Motor neuron (in vitro differentiated cells): ENCODE measurements at regions of chr17 and their contacts with region 1.

Region 1: DNA sequence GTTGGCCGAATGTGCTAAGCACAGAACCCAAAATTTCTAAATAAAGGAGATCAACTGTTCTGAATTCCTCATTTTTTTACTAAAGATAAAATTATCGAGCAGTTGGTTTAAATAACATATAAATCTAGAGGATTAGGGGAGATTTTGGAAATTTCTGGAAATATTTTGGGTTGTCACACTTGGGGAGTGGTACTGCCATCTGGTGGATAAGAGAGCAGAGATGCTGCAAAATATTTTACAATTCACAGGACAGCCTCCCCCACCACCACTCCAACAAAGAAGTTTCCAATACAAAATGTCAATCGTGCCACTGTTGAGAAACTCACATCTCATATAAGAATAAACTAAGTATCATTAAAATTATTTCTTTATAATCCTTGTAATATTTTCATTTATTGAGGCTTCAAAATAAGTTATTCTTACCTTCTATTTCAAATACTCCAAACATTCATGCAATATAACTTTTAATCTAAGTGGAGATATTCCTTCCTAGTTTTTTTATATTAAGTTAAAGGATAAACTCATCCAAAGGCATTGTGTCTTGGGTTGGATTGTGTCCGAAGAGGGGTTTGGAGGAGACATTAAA is 17.0 kb upstream of the ABCA8 start:
- ATAC-seq: no peak
- H3K4me3 ChIP-seq: no peak overlapping the region
- H3K27ac ChIP-seq: no peak overlapping the region
- H3K4me1 ChIP-seq: no peaks in the 10 kb centered on the region

Region 2: DNA sequence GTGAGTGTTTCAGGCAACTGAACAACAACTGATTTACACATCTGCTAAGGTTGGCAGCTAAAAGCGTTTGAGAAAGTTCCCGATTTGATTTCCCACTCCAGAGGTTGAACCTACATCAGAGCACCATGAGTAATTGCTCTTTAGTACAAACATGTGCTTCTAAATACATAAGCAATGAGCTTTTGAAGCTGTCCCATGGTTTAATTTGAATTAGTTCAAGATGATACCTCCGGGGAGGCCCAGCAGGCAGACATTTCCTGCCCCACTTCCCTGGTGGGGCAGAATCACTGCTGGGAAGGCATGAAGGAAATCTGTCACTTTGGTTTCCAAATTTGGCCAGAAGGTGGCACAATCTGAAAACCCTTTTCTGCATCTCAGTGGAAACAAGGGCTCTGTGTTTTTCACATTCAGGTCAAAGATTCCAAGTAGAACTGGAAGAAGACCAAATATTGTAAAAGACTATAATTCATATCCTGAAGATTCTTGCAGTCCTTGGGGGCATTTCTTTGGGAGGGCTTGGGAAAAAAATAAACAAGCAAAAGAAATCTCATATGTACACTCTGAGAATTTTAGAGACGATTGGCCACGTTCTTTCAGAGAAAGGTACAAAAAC is 194.9 kb before region 1 on chr17:
- in situ Hi-C with region 1: loop called in 3 of 9 experiments (anchors 25 kb)
- ATAC-seq: peak in 4 of 8 experiments; percentile 43 to 87 (median 83)
- H3K4me3 ChIP-seq: no peak overlapping the region
- H3K27ac ChIP-seq: no peak overlapping the region
- H3K4me1 ChIP-seq: no peaks in the 10 kb centered on the region